ENCODE measurements at regions of chr2 and their contacts with region 1.

Region 1: GRCh38 chr2:25453199-25453905 is 111.6 kb upstream of the DNMT3A start:
- DNase-seq: peak; percentile 59
- ATAC-seq: peak; percentile 96
- H3K4me3 Mint-ChIP-seq: peak overlapping the region; percentile 32
- H3K27ac Mint-ChIP-seq: peak overlapping the region; percentile 92
- H3K4me1 Mint-ChIP-seq: peaks cover 33% of the 10 kb centered on the region
- H3K27me3 Mint-ChIP-seq: no peaks in the 10 kb centered on the region
- CTCF ChIP-seq: no peak

Region 2: DNA sequence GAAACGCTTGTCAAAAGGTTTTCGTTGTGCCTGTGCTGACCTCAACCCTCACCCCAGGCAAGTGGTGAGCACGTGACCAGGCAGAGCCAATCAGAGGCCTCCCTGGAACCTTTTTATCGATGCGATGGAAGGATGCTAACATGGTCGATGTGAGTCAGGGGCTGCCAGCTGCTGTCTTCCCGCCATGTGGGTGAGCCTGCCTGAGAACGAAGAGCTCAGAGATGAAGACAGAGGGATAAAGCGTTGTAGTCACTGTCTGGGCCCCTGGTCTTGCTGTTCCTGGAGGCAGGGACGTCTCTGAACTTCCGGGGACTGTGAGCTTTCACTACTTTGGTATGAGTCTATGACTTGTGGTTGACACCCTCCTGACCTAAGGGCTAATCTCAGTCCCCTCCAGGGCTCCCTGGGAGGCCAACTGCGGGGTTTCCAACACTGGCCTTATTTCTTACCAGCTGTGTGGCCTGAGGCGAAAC is 130.3 kb before region 1 on chr2:
- CTCF ChIA-PET with region 1: no interaction called
- POLR2A ChIA-PET with region 1: no interaction called
- intact Hi-C with region 1: no loop called
- DNase-seq: peak; percentile 87
- ATAC-seq: peak; percentile 75
- H3K4me3 Mint-ChIP-seq: peak overlapping the region; percentile 65
- H3K27ac Mint-ChIP-seq: peak overlapping the region; percentile 97
- H3K4me1 Mint-ChIP-seq: peaks cover 64% of the 10 kb centered on the region
- H3K27me3 Mint-ChIP-seq: no peaks in the 10 kb centered on the region
- CTCF ChIP-seq: no peak

Region 3: GRCh38 chr2:25441345-25442070 is 11.8 kb before region 1 on chr2:
- CTCF ChIA-PET with region 1: interaction called, 4 read pairs
- POLR2A ChIA-PET with region 1: interaction called, 10 read pairs
- intact Hi-C with region 1: no loop called
- DNase-seq: no peak
- ATAC-seq: no peak
- H3K4me3 Mint-ChIP-seq: no peak overlapping the region
- H3K27ac Mint-ChIP-seq: no peak overlapping the region
- H3K4me1 Mint-ChIP-seq: no peaks in the 10 kb centered on the region
- H3K27me3 Mint-ChIP-seq: no peaks in the 10 kb centered on the region
- CTCF ChIP-seq: no peak

Region 4: DNA sequence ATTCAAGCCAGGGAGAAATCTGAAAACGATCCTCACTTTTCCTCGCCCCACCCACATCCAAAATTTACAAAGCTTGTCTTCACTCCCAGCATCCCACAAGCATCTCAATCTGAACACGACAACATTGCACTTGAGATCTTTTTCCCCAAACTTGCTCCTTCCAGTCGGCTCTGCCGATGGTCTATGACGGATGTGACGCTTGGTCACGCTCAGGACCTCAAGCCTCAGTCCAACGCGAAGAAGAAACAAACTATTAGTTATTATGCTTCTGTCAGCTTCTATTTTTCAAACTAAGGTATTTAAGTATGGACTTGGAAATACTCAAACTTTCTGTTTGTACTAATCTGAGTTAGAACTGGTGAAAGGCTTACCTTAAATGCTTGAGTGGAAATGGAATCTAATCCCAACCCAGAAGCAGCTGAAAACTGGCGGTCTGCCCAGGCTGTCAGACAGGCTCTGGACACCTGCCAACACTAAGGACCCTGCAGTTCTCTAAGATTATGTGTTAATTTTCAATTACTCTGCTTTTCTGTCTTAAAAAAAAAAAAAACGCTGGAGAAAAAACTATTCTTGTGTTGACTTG is 20.5 kb after region 1 on chr2:
- CTCF ChIA-PET with region 1: interaction called, 5 read pairs
- POLR2A ChIA-PET with region 1: interaction called, 12 read pairs
- intact Hi-C with region 1: no loop called
- DNase-seq: no peak
- ATAC-seq: no peak
- H3K4me3 Mint-ChIP-seq: no peak overlapping the region
- H3K27ac Mint-ChIP-seq: no peak overlapping the region
- H3K4me1 Mint-ChIP-seq: no peaks in the 10 kb centered on the region
- H3K27me3 Mint-ChIP-seq: no peaks in the 10 kb centered on the region
- CTCF ChIP-seq: no peak